Vagina (tissue), 2 donors: ENCODE measurements at regions of chr9 and their contacts with region 1.

Region 1: DNA sequence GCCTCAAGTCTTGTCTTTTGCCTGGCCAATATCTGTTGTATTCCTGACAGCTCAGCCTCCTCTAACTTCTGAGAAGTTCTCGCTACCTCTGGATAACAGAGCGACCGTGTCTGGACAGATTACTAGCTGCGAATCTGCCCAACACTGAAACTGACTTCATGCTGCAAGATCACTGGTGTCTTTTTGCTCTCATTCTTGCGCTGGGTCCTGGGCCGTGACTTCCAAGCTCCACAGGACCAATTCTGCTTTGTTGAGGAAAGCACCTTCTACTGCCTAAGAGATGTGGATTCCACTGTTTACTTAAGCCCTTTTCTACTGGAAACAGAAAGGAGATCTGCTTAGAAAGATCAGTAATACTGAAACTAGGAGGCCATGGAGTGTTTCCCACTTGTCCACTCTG is 978.8 kb upstream of the DMAC1 start:
- DNase-seq: no peak
- H3K4me3 ChIP-seq: no peak overlapping the region
- H3K27ac ChIP-seq: no peak overlapping the region
- H3K4me1 ChIP-seq: no peaks in the 10 kb centered on the region
- H3K27me3 ChIP-seq: no peaks in the 10 kb centered on the region
- CTCF ChIP-seq: no peak
- POLR2A ChIP-seq: no peak

Region 2: GRCh38 chr9:8643896-8644295 is 134.5 kb before region 1 on chr9:
- intact Hi-C with region 1: no loop called
- DNase-seq: no peak
- H3K4me3 ChIP-seq: no peak overlapping the region
- H3K27ac ChIP-seq: no peak overlapping the region
- H3K4me1 ChIP-seq: no peaks in the 10 kb centered on the region
- H3K27me3 ChIP-seq: no peaks in the 10 kb centered on the region
- CTCF ChIP-seq: no peak
- POLR2A ChIP-seq: no peak

Region 3: DNA sequence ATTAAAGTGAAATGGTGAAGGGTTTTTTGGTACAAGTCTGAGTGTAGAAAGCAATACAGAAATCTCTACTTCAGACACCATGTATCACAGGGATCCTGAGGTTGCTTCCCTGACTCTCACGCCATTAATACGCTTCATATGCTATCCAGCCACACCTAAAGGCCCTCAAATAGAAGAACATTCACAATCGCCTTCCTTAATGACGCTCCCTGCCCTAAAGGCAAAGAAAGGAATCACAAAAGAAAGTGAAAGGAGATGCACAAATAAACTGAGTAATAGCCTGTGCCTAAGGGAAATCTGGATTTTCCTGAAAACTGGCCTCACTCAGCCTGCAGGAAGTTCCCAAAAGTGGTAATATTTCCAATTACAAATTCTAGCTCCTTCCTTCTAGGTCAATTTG is 23.9 kb after region 1 on chr9:
- intact Hi-C with region 1: loop called (anchors 2 kb)
- DNase-seq: no peak
- H3K4me3 ChIP-seq: no peak overlapping the region
- H3K27ac ChIP-seq: no peak overlapping the region
- H3K4me1 ChIP-seq: no peaks in the 10 kb centered on the region
- H3K27me3 ChIP-seq: no peaks in the 10 kb centered on the region
- CTCF ChIP-seq: no peak
- POLR2A ChIP-seq: no peak